BJ (cell line): ENCODE measurements at regions of chr17 and their contacts with region 1.

Region 1: DNA sequence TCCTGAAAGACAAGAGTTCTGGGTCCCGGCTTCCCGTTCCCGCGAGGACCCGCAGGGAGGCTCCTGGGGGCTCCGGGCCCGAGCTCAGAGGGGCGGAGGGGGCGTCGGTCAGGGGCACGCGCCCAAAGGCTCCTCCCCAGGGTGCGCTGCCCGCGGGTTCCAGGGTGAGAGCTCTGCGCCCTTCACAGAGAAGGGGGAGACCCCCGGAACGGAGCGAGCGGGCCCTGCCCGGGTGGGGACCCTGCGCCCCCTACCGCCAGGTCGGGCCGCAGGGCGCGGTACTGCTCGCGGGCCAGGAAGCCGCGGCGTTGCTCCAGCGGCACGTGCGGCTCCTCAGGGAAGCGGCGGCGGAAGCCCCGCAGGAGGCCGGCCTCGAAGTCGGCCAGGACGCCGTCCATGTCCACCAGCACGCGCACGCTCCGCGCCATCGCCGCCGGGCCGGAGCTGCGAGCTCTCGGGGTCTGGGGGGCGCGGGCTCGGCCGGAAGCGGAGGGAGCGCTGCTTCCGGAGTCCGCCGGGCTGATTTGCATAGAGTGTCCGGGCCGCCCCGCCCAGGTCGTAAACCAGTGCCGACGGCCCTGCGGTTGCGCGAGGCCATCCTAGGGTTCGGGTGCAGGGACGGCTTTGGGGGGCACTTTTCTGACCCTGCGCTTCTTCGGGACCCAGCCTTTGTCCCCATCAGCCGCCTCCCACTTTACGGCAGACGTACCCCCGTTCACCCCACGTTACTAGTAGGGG is at the start of gene NT5C:
- DNase-seq: no peak
- H3K4me3 ChIP-seq: peak within 1 kb of the TSS; percentile 66
- H3K27me3 ChIP-seq: no peaks in the 10 kb centered on the region
- CTCF ChIP-seq: peak; percentile 53
- polyA plus RNA-seq, gene NT5C: 38.3 and 61.8 TPM in 2 replicates

Region 2: DNA sequence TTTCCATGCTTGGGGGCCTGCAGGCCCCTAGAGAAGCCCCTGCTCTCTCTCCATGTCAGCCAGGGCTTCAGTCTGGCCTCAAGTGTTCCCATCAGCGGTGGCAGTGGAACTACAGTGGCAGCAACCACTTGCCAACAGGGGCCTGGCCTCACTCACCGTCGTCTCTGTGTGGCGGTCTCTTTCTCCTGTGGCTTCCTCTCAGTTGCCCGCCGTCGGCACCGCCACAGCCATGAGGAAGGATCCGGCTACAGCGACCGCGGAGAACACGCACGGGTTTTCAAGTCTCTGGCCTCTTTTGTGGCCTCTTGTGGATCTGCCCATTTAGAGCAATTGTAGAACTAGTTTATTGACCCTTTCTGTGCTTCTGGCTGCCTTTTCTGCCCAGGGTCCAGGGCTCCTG is 13.1 kb before region 1 on chr17:
- CTCF ChIA-PET with region 1: interaction called, 78 read pairs
- POLR2A ChIA-PET with region 1: no interaction called
- DNase-seq: no peak
- H3K4me3 ChIP-seq: no peak overlapping the region
- H3K27me3 ChIP-seq: no peaks in the 10 kb centered on the region
- CTCF ChIP-seq: no peak

Region 3: DNA sequence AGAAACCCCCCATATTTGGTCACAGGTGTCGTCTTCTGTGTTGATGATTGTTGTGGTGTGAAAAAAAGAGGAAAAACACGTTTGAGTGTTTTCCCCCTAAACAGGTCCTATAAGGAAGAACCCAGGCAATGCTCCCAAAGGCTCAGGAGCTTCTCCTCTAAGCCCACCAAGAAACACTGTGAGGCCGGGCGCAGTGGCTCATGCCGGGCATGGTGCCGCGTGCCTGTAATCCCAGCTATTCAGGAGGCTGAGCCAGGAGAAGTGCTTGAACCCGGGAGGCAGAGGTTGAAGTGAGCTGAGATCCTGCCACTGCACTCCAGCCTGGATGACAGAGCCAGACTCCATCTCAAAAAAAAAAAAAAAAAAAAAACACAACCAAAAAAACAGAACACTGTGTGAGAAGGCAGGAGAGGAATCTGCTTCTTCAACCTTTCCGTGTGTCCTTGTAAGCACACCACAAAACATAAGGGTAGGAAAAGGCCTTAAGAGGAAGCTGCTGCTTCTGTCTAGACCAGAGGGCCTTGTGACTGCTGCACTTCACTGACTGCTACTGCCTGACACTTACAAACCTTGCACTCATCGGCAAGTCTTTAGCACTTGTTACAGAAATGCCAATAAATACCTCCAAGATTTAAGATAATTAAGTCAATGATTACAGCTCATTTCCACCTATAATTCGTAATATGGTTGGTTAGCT is 13.5 kb after region 1 on chr17:
- CTCF ChIA-PET with region 1: interaction called, 11 read pairs
- POLR2A ChIA-PET with region 1: no interaction called
- DNase-seq: no peak
- H3K4me3 ChIP-seq: no peak overlapping the region
- H3K27me3 ChIP-seq: no peaks in the 10 kb centered on the region
- CTCF ChIP-seq: no peak

Region 4: GRCh38 chr17:75182569-75183450 is 51.4 kb after region 1 on chr17 and contains the start of gene SUMO2:
- CTCF ChIA-PET with region 1: no interaction called
- POLR2A ChIA-PET with region 1: no interaction called
- DNase-seq: peak; percentile 60
- H3K4me3 ChIP-seq: peak within 1 kb of the TSS; percentile 98
- H3K27me3 ChIP-seq: no peaks in the 10 kb centered on the region
- CTCF ChIP-seq: no peak; the same call in 1 of the 2 replicates
- polyA plus RNA-seq, gene SUMO2: 131 and 304 TPM in 2 replicates

Region 5: GRCh38 chr17:75277664-75278071 is 146.2 kb after region 1 on chr17:
- CTCF ChIA-PET with region 1: no interaction called
- POLR2A ChIA-PET with region 1: no interaction called
- DNase-seq: peak; percentile 76
- H3K4me3 ChIP-seq: no peak overlapping the region
- H3K27me3 ChIP-seq: no peaks in the 10 kb centered on the region
- CTCF ChIP-seq: no peak